Endothelial cell of umbilical vein (primary cell): ENCODE measurements at regions of chr1 and their contacts with region 1.

Region 1: DNA sequence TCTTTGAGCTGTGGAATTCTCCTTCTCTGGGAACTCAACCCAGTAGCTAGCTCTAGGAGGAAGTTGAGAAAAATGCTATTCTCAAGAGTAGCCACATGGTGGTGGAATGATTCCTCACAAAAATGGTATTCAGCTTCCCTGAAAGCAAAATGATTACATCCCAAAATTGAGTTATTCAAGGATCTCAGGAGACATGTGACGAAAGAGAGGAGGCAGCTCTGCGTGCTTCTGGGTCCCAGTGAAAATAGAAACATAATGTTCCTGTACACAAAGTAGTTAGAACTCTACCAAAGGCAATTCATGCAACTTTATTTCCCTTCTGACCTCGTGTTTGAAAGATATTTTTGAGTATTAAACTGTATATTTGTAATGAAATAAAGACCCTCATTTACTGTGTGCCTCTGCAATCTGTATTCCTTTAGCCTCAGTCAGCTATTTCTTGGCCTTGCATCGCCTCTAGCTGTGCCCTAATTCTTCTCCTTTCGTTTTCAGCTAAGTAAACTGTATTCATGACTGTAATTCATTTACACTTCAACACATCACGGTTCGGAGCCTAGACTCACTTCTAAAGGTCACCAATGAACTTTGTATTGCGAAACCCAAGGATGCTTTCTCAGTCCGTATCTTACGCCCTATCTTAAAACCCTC is 167.3 kb downstream of the FASLG start:
- DNase-seq: peak; percentile 80
- H3K4me3 ChIP-seq: no peak overlapping the region
- H3K27ac ChIP-seq: peak overlapping the region; percentile 72
- H3K4me1 ChIP-seq: peaks cover 8% of the 10 kb centered on the region
- H3K27me3 ChIP-seq: no peaks in the 10 kb centered on the region
- CTCF ChIP-seq: peak; percentile 50 to 51
- POLR2A ChIP-seq: no peak

Region 2: GRCh38 chr1:172466795-172467407 is 359.3 kb before region 1 on chr1:
- CTCF ChIA-PET with region 1: no interaction called
- POLR2A ChIA-PET with region 1: no interaction called
- dilution Hi-C with region 1: no loop called
- intact Hi-C with region 1: no loop called
- DNase-seq: no peak
- H3K4me3 ChIP-seq: no peak overlapping the region
- H3K27ac ChIP-seq: no peak overlapping the region
- H3K4me1 ChIP-seq: no peaks in the 10 kb centered on the region
- H3K27me3 ChIP-seq: peaks cover 2 to 3% of the 10 kb centered on the region in 2 experiments
- CTCF ChIP-seq: no peak
- POLR2A ChIP-seq: no peak

Region 3: DNA sequence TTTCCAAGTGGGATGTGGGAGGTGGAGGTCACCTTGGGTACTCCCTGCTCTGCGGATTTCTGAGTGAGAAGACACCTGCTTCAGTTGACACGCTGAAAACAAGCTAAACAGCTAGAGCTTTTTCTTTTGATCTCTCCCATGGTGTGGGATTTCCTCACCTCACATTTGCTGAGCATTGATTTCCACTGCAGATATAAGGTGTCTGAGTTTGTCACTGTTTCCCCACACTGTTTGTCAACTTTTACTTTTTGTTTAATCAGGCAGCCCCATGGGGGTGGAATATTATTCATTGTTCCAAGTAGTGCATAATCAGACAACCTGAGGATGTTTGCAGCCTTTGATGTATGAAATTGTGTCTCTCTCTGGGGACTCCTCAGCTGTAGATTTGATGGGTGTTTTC is 117.8 kb before region 1 on chr1:
- CTCF ChIA-PET with region 1: no interaction called
- POLR2A ChIA-PET with region 1: no interaction called
- dilution Hi-C with region 1: no loop called
- intact Hi-C with region 1: no loop called
- DNase-seq: no peak
- H3K4me3 ChIP-seq: no peak overlapping the region
- H3K27ac ChIP-seq: no peak overlapping the region
- H3K4me1 ChIP-seq: no peaks in the 10 kb centered on the region
- H3K27me3 ChIP-seq: no peaks in the 10 kb centered on the region
- CTCF ChIP-seq: no peak
- POLR2A ChIP-seq: no peak

Region 4: DNA sequence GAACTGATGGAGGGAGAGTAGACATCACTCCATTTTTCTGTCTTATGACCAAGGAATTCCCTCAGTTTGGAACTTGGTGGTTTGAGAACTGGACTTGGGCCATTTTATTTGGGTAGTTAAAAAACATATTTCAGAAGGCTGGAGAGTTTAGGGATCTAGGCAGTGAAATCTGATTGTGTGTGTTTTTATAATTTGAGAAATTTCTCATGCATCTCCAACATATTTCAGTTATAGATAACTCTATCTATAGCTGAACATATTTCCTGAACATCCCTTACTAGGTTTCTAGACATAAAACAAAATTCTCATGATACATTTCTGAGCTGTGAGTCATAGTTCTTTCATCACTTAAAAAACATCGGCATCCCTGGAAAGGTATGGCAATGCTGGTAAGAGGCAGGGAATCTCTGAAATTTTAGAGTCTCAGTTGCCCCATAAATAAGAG is 64.6 kb before region 1 on chr1:
- CTCF ChIA-PET with region 1: no interaction called
- POLR2A ChIA-PET with region 1: no interaction called
- dilution Hi-C with region 1: no loop called
- intact Hi-C with region 1: no loop called
- DNase-seq: peak; percentile 66
- H3K4me3 ChIP-seq: no peak overlapping the region
- H3K27ac ChIP-seq: peak overlapping the region; percentile 73
- H3K4me1 ChIP-seq: peaks cover 13% of the 10 kb centered on the region
- H3K27me3 ChIP-seq: no peaks in the 10 kb centered on the region
- CTCF ChIP-seq: no peak
- POLR2A ChIP-seq: no peak

Region 5: GRCh38 chr1:172843444-172843843 is 17.2 kb after region 1 on chr1:
- CTCF ChIA-PET with region 1: no interaction called
- POLR2A ChIA-PET with region 1: no interaction called
- dilution Hi-C with region 1: no loop called
- intact Hi-C with region 1: no loop called
- DNase-seq: peak; percentile 32
- H3K4me3 ChIP-seq: no peak overlapping the region
- H3K27ac ChIP-seq: no peak overlapping the region
- H3K4me1 ChIP-seq: peaks cover 3% of the 10 kb centered on the region
- H3K27me3 ChIP-seq: no peaks in the 10 kb centered on the region
- CTCF ChIP-seq: no peak
- POLR2A ChIP-seq: no peak

Region 6: GRCh38 chr1:172895050-172895460 is 68.8 kb after region 1 on chr1:
- CTCF ChIA-PET with region 1: interaction called, 21 read pairs
- POLR2A ChIA-PET with region 1: no interaction called
- dilution Hi-C with region 1: no loop called
- intact Hi-C with region 1: no loop called
- DNase-seq: peak; percentile 85
- H3K4me3 ChIP-seq: peak overlapping the region in 1 of 3 experiments; percentile 41
- H3K27ac ChIP-seq: peak overlapping the region; percentile 65
- H3K4me1 ChIP-seq: peaks cover 70% of the 10 kb centered on the region
- H3K27me3 ChIP-seq: no peaks in the 10 kb centered on the region
- CTCF ChIP-seq: no peak
- POLR2A ChIP-seq: no peak

Region 7: DNA sequence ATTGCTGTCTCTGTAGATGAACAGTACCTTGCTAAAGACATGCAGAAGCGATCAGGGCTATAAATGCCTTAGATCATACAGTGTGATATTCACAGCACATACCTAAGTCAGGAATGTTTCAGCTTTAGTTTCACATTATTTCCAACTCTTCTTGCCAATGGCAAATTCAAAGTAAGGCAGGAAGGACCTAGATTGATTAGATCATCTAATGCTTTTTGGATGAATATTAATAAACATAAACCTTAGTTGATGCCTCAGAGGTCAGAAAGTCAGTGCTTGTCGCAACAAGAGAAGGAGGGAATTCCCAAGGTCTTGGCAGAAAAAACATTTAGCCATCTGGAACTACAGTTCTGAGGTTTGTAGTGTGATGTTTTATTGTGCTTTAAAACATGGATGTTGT is 102.2 kb after region 1 on chr1:
- CTCF ChIA-PET with region 1: interaction called, 15 read pairs
- POLR2A ChIA-PET with region 1: no interaction called
- dilution Hi-C with region 1: no loop called
- intact Hi-C with region 1: no loop called
- DNase-seq: peak; percentile 65
- H3K4me3 ChIP-seq: no peak overlapping the region
- H3K27ac ChIP-seq: peak overlapping the region; percentile 7
- H3K4me1 ChIP-seq: peaks cover 34% of the 10 kb centered on the region
- H3K27me3 ChIP-seq: no peaks in the 10 kb centered on the region
- CTCF ChIP-seq: no peak
- POLR2A ChIP-seq: no peak

Region 8: DNA sequence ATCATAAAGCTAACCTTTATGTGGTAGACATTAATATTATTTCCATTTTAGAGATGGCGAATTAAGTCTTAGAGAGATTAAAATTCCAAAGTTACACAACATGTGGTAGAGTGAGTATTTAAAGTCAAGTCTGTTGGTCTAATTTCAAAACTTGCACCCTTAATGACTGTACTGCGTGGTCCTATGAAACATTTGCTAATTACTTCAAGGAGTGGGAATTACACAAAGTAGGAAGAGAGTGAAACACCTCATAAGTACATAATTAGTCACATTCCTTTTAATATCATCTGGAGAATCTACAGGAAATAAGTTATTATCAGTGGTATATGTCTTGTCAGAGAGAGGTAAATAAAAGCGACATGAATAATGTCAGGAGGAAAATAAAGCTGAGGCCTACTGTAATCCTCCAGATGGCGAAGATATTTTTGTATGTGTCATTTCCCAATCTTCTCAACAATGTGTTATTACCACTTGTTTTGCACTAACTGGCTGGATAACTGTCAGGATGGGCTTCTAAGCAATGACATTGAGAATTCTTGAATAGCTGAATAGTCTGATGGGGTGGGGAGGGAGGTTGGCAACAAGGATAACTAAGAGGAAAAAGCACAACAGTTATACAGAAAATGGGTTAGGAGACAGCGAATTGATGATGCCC is 129.1 kb after region 1 on chr1:
- CTCF ChIA-PET with region 1: interaction called, 10 read pairs
- POLR2A ChIA-PET with region 1: interaction called, 3 read pairs
- dilution Hi-C with region 1: no loop called
- intact Hi-C with region 1: loop called (anchors 1 kb)
- DNase-seq: peak; percentile 85
- H3K4me3 ChIP-seq: no peak overlapping the region
- H3K27ac ChIP-seq: peak overlapping the region; percentile 90
- H3K4me1 ChIP-seq: peaks cover 43% of the 10 kb centered on the region
- H3K27me3 ChIP-seq: no peaks in the 10 kb centered on the region
- CTCF ChIP-seq: no peak
- POLR2A ChIP-seq: peak; percentile 33

Region 9: DNA sequence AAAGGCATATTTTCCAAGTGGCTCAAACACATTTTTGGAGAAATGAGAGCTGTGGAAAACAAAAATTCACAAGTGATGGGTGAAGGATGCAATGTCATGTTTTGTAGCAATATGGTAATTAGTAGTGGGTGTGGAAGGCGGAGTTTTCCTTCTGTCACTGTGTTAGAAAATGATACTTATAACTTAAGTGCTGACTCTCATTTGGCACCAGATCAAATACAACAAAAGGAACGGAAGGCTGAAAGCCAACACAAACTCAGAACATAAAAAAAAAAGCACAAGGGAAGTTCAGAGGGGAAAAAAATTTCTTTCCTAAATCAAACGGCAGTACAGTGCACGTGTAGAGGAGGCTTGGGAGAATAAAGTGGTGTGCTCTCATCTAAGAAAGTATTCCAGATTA is 224.6 kb after region 1 on chr1 and contains the start of gene TNFSF18:
- CTCF ChIA-PET with region 1: interaction called, 7 read pairs
- POLR2A ChIA-PET with region 1: no interaction called
- dilution Hi-C with region 1: no loop called
- intact Hi-C with region 1: loop called (anchors 1 kb)
- DNase-seq: peak; percentile 96
- H3K4me3 ChIP-seq: peak within 1 kb of the TSS in 2 of 3 experiments; percentile 1 to 63
- H3K27ac ChIP-seq: peak within 1 kb of the TSS; percentile 54
- H3K4me1 ChIP-seq: peaks cover 52% of the 10 kb centered on the region
- H3K27me3 ChIP-seq: no peaks in the 10 kb centered on the region
- CTCF ChIP-seq: no peak
- POLR2A ChIP-seq: no peak
- total RNA-seq, gene TNFSF18: 39.4 and 39.9 TPM in 2 replicates

Region 10: DNA sequence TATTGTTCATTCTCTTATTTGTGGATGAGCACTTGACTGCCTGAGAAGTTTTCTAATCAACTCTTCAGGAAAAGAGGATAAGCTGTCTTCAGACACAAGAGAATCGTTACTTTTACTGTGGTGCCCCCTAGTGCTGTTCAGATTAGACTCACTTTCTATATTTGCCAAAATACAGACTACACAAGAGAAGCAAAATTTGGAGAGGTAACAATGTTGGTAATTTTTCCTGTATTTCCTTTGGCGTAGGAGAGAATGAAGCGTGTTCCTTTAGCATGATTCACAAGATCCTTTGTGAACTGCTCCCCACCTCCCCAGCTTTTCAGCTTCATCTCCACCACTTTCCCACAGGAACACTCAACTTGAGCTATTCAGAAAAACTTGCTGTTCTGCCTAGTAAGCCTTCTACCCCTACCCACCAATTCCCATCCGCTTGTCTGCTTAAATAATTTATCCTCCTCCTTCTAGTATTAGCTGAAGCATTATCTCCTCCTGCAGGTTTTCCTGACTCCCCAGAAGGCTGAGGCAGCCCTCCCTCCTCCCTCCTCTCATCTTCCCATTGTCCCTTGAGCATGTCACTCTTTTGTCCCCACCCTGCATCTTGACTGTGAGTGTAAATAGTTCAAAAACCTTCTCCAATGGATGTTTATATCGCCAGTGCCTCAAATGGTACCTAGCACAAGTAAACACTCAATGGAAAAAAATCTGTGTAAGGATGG is 376.4 kb after region 1 on chr1:
- CTCF ChIA-PET with region 1: interaction called, 219 read pairs
- POLR2A ChIA-PET with region 1: interaction called, 3 read pairs
- dilution Hi-C with region 1: no loop called
- intact Hi-C with region 1: loop called (anchors 1 kb)
- DNase-seq: peak; percentile 90
- H3K4me3 ChIP-seq: peak overlapping the region; percentile 9 to 98 (median 91)
- H3K27ac ChIP-seq: peak overlapping the region; percentile 87
- H3K4me1 ChIP-seq: peaks cover 47% of the 10 kb centered on the region
- H3K27me3 ChIP-seq: no peaks in the 10 kb centered on the region
- CTCF ChIP-seq: peak; percentile 39 to 59
- POLR2A ChIP-seq: no peak

Region 11: GRCh38 chr1:173429471-173430402 is 603.5 kb after region 1 on chr1:
- CTCF ChIA-PET with region 1: interaction called, 12 read pairs
- POLR2A ChIA-PET with region 1: no interaction called
- dilution Hi-C with region 1: no loop called
- intact Hi-C with region 1: no loop called
- DNase-seq: peak; percentile 75
- H3K4me3 ChIP-seq: no peak overlapping the region
- H3K27ac ChIP-seq: peak overlapping the region; percentile 64
- H3K4me1 ChIP-seq: peaks cover 12% of the 10 kb centered on the region
- H3K27me3 ChIP-seq: no peaks in the 10 kb centered on the region
- CTCF ChIP-seq: peak; percentile 56 to 65
- POLR2A ChIP-seq: no peak